Esophagus muscularis mucosa (tissue), 4 donors: ENCODE measurements at regions of chr10 and their contacts with region 1.

Region 1: GRCh38 chr10:132387764-132388210 is 9.2 kb upstream of the PWWP2B start:
- DNase-seq: no peak
- H3K4me3 ChIP-seq: peak overlapping the region in 2 of 4 donors; percentile 18 to 35
- H3K27ac ChIP-seq: peak overlapping the region in 1 of 4 donors; percentile 42
- H3K4me1 ChIP-seq: peaks cover 7 to 15% (median 13%) of the 10 kb centered on the region in 4 donors
- H3K27me3 ChIP-seq: no peaks in the 10 kb centered on the region
- CTCF ChIP-seq: peak; percentile 63 to 73 (median 69)
- EP300 ChIP-seq: no peak
- POLR2A ChIP-seq: no peak

Region 2: GRCh38 chr10:132307823-132308587 is 79.8 kb before region 1 on chr10 and contains the start of gene STK32C:
- intact Hi-C with region 1: no loop called
- DNase-seq: peak; percentile 99
- H3K4me3 ChIP-seq: peak within 1 kb of the TSS; percentile 88 to 98 (median 94)
- H3K27ac ChIP-seq: peak within 1 kb of the TSS; percentile 79 to 92 (median 87)
- H3K4me1 ChIP-seq: peaks cover 12 to 27% (median 24%) of the 10 kb centered on the region in 4 donors
- H3K27me3 ChIP-seq: no peaks in the 10 kb centered on the region
- CTCF ChIP-seq: no peak
- EP300 ChIP-seq: no peak
- POLR2A ChIP-seq: no peak
- total RNA-seq, gene STK32C: 4.8 to 10.9 (median 7.8) TPM

Region 3: GRCh38 chr10:132347211-132347930 is 40.4 kb before region 1 on chr10:
- intact Hi-C with region 1: no loop called
- DNase-seq: no peak
- H3K4me3 ChIP-seq: no peak overlapping the region
- H3K27ac ChIP-seq: no peak overlapping the region
- H3K4me1 ChIP-seq: peaks cover 0 to under 1% (median 0%) of the 10 kb centered on the region in 4 donors
- H3K27me3 ChIP-seq: no peaks in the 10 kb centered on the region
- CTCF ChIP-seq: no peak
- EP300 ChIP-seq: no peak
- POLR2A ChIP-seq: no peak

Region 4: DNA sequence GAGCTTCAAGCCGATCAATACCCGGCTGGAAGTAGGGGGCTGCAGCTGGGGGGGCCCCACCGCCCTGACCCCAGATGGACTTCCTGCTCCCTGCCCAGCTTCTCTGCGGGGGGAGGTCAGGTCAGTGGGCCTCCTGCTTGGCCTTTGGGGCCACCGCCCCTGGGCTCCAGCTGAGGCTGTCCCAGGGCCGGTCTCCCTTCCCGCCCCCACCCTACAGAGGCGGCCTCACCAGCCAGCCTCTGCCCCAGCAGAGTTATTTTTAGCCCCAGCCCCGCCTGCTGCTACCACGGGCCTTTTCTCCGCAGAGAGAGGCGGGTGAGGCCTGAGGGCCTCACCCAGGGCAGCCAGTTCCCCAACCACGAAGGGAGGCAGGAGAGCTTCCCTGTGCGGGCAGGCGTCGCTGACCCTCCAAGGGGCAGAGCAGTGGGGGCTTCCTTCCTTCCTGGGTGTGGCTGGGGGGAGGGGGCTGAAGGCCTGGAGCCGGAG is 33.6 kb after region 1 on chr10:
- intact Hi-C with region 1: no loop called
- DNase-seq: no peak
- H3K4me3 ChIP-seq: peak overlapping the region; percentile 26 to 34 (median 32)
- H3K27ac ChIP-seq: peak overlapping the region; percentile 88 to 96 (median 92)
- H3K4me1 ChIP-seq: peaks cover 44 to 76% (median 75%) of the 10 kb centered on the region in 4 donors
- H3K27me3 ChIP-seq: no peaks in the 10 kb centered on the region
- CTCF ChIP-seq: no peak
- EP300 ChIP-seq: no peak
- POLR2A ChIP-seq: no peak

Region 5: GRCh38 chr10:132452631-132453469 is 65.1 kb after region 1 on chr10:
- intact Hi-C with region 1: loop called (anchors 1 kb)
- DNase-seq: no peak
- H3K4me3 ChIP-seq: peak overlapping the region; percentile 9 to 43 (median 22)
- H3K27ac ChIP-seq: peak overlapping the region in 2 of 4 donors; percentile 26 to 40
- H3K4me1 ChIP-seq: peaks cover 15 to 35% (median 30%) of the 10 kb centered on the region in 4 donors
- H3K27me3 ChIP-seq: peaks cover 0 to 15% (median 0%) of the 10 kb centered on the region in 4 donors
- CTCF ChIP-seq: peak; percentile 97 to 100 (median 99)
- EP300 ChIP-seq: no peak
- POLR2A ChIP-seq: no peak

Region 6: DNA sequence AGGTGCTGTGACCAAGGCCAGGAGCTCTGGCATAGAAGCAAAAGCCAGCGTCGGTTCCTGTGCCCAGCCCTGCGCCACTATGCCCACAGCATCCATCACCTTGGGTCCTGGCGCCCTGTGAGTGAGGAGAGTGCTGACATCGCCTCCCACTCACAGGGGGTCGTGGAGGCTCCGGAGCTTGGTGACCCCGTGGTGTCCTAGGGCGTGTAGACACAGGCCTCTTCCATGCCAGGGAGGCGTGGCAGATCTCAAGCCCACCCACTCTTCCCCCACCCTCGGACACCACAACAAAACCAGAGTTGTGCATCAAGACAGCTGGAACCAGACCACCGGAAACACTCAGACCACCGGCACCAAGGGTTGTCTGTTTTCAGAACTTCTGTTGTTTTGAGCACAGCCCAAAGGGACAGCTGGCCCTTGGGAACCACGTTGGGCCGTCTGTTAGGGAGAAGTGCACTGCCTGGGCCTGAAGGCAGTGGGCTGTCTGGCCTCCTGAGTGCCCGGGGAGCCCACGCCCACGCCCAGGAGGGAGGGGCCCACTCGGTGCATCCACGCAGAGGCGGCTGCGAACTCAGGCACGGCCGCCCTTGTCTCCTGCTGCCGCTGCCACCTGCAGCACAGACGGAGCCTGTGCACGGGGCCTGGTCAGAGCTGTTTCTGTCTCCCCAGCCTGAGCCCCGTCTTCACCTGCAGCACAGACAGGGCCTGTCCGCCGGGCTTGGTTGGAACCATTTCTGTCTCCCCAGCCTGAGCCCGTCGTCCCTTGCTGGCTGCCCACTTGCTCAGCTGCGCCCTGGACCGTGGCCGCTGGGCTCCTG is 256.1 kb after region 1 on chr10:
- intact Hi-C with region 1: loop called (anchors 10 kb)
- DNase-seq: no peak
- H3K4me3 ChIP-seq: no peak overlapping the region
- H3K27ac ChIP-seq: peak overlapping the region; percentile 60 to 98 (median 95)
- H3K4me1 ChIP-seq: peaks cover 24 to 97% (median 87%) of the 10 kb centered on the region in 4 donors
- H3K27me3 ChIP-seq: no peaks in the 10 kb centered on the region
- CTCF ChIP-seq: no peak
- EP300 ChIP-seq: no peak
- POLR2A ChIP-seq: no peak